HEK293 (cell line): ENCODE measurements at regions of chr3 and their contacts with region 1.

Region 1: DNA sequence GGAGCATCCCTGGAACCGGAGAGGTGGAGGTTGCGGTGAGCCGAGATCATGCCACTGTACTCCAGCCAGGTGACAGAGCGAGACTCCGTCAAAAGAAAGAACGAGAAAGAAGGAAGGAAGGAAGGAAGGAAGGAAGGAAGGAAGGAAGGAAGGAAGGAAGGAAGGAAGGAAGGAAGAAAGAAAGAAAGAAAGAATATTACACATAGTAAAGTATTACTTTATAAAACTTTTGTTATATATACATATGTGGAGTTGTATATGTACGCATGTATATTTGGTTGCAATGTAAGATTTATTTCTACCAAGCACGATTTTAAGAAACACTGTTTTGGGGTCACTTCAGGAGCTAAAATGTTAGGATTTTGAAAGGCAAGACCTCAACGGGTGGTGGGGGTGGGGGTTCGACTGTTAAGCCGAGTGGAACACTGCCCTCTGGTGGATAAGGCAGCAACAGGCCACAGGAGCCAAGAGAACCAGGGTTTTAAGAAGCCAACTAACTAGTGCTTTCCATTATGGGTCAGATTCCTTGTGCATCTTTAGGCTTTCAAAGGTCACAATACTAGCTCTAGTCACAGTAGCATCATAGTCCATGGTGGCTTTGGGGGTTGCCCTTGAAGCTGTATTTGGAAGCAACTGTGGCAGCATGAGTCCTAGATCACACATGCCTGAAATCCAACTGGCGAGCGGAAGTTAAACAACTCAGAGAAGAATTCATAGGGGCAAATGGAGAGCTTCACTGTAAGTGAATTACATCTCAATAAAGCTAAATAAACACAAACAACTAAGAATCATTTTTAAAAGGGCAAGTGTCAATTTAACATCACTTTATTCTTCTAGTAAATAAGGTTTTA is 22.5 kb downstream of the GLB1 start:
- H3K4me3 ChIP-seq: no peak overlapping the region
- H3K27ac ChIP-seq: no peak overlapping the region
- H3K4me1 ChIP-seq: peaks cover 5% of the 10 kb centered on the region; the same call in 1 of the 2 replicates
- CTCF ChIP-seq: peak; percentile 26; the same call in 1 of the 2 replicates

Region 2: GRCh38 chr3:32947789-32948238 is 126.6 kb before region 1 on chr3:
- CTCF ChIA-PET with region 1: interaction called, 60 read pairs
- POLR2A ChIA-PET with region 1: no interaction called
- H3K4me3 ChIP-seq: no peak overlapping the region
- H3K27ac ChIP-seq: no peak overlapping the region
- H3K4me1 ChIP-seq: no peaks in the 10 kb centered on the region
- CTCF ChIP-seq: no peak

Region 3: GRCh38 chr3:33057320-33058298 is 16.8 kb before region 1 on chr3:
- CTCF ChIA-PET with region 1: interaction called, 15 read pairs
- POLR2A ChIA-PET with region 1: no interaction called
- H3K4me3 ChIP-seq: no peak overlapping the region
- H3K27ac ChIP-seq: no peak overlapping the region
- H3K4me1 ChIP-seq: no peaks in the 10 kb centered on the region
- CTCF ChIP-seq: no peak